ENCODE measurements at regions of chr1 and their contacts with region 1.

Region 1: GRCh38 chr1:159798893-159799292 is 3.3 kb upstream of the FCRL6 start:
- DNase-seq: peak; percentile 64
- H3K4me3 Mint-ChIP-seq: no peak overlapping the region
- H3K27ac Mint-ChIP-seq: no peak overlapping the region
- H3K4me1 Mint-ChIP-seq: peaks cover 17% of the 10 kb centered on the region
- H3K27me3 Mint-ChIP-seq: peaks cover 53% of the 10 kb centered on the region

Region 2: GRCh38 chr1:159780583-159781582 is 18.0 kb before region 1 on chr1 and contains the start of gene DUSP23:
- CTCF ChIA-PET with region 1: interaction called, 31 read pairs
- DNase-seq: peak; percentile 98
- H3K4me3 Mint-ChIP-seq: peak within 1 kb of the TSS; percentile 81
- H3K27ac Mint-ChIP-seq: peak within 1 kb of the TSS; percentile 25
- H3K4me1 Mint-ChIP-seq: peaks cover 32% of the 10 kb centered on the region
- H3K27me3 Mint-ChIP-seq: peaks cover 6% of the 10 kb centered on the region

Region 3: DNA sequence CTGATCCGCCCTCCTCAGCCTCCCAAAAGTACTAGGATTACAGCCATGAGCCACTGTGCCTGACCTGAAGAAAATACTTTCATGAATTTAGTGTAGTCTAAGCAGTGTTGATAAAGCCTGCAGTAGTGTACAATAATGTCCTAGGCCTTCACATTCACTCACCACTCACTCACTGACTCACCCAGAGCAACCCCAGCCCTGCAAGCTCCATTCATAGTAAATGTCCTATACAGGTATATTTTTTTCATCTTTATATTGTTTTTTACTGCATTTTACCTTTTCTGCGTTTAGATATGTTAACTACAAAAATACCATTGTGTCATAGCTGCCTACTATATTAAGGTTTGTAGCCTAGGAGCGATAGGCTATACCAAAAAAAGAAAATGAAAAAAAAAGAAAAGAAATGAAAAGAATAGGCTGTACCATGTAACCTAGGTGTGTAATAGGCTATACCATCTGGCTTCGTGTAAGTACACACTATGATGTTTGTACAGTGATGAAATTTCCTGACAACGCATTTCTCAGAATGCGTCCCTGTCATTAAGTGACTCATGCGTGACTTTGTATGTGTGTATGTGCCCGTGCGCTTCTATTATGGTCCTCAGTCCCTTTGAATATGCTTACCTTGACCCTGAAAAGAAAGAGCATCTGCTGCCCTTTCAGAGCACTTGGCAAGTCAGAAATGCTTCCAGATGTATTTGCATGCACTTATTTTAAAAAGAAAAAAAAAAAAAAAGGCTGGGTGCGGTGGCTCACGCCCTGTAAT is 18.6 kb after region 1 on chr1:
- CTCF ChIA-PET with region 1: interaction called, 10 read pairs
- DNase-seq: no peak
- H3K4me3 Mint-ChIP-seq: no peak overlapping the region
- H3K27ac Mint-ChIP-seq: no peak overlapping the region
- H3K4me1 Mint-ChIP-seq: no peaks in the 10 kb centered on the region
- H3K27me3 Mint-ChIP-seq: peaks cover 61% of the 10 kb centered on the region

Region 4: GRCh38 chr1:159829273-159829634 is 30.4 kb after region 1 on chr1:
- CTCF ChIA-PET with region 1: interaction called, 11 read pairs
- DNase-seq: no peak
- H3K4me3 Mint-ChIP-seq: no peak overlapping the region
- H3K27ac Mint-ChIP-seq: no peak overlapping the region
- H3K4me1 Mint-ChIP-seq: peaks cover 48% of the 10 kb centered on the region
- H3K27me3 Mint-ChIP-seq: peaks cover 34% of the 10 kb centered on the region

Region 5: GRCh38 chr1:159854693-159855192 is 55.9 kb after region 1 on chr1:
- CTCF ChIA-PET with region 1: interaction called, 14 read pairs
- DNase-seq: peak; percentile 84
- H3K4me3 Mint-ChIP-seq: peak overlapping the region; percentile 71
- H3K27ac Mint-ChIP-seq: peak overlapping the region; percentile 81
- H3K4me1 Mint-ChIP-seq: peaks cover 15% of the 10 kb centered on the region
- H3K27me3 Mint-ChIP-seq: peaks cover 14% of the 10 kb centered on the region

Region 6: GRCh38 chr1:160108888-160109662 is 310.2 kb after region 1 on chr1:
- CTCF ChIA-PET with region 1: no interaction called
- DNase-seq: peak; percentile 59
- H3K4me3 Mint-ChIP-seq: no peak overlapping the region
- H3K27ac Mint-ChIP-seq: peak overlapping the region; percentile 43
- H3K4me1 Mint-ChIP-seq: no peaks in the 10 kb centered on the region
- H3K27me3 Mint-ChIP-seq: peaks cover 49% of the 10 kb centered on the region

Measured in activated naive CD4-positive, alpha-beta T cell treated with anti-CD3 and anti-CD28 coated beads, Interleukin-2, amount 10 ng/mL, durations not matched to agents 7 days and 5 days (primary cell).